Activated naive CD4-positive, alpha-beta T cell treated with anti-CD3 and anti-CD28 coated beads for 36 hours (primary cell): ENCODE measurements at regions of chr5 and their contacts with region 1.

Region 1: GRCh38 chr5:145825751-145826180 is 9.4 kb downstream of the PRELID2 start:
- DNase-seq: no peak
- H3K4me3 Mint-ChIP-seq: no peak overlapping the region
- H3K27ac Mint-ChIP-seq: no peak overlapping the region
- H3K4me1 Mint-ChIP-seq: no peaks in the 10 kb centered on the region
- H3K27me3 Mint-ChIP-seq: no peaks in the 10 kb centered on the region

Region 2: GRCh38 chr5:144203750-144204596 is 1621.8 kb before region 1 on chr5:
- CTCF ChIA-PET with region 1: interaction called, 15 read pairs
- intact Hi-C with region 1: loop called (anchors 1 kb)
- DNase-seq: peak; percentile 65
- H3K4me3 Mint-ChIP-seq: no peak overlapping the region
- H3K27ac Mint-ChIP-seq: no peak overlapping the region
- H3K4me1 Mint-ChIP-seq: peaks cover 17% of the 10 kb centered on the region
- H3K27me3 Mint-ChIP-seq: peaks cover 38% of the 10 kb centered on the region

Region 3: DNA sequence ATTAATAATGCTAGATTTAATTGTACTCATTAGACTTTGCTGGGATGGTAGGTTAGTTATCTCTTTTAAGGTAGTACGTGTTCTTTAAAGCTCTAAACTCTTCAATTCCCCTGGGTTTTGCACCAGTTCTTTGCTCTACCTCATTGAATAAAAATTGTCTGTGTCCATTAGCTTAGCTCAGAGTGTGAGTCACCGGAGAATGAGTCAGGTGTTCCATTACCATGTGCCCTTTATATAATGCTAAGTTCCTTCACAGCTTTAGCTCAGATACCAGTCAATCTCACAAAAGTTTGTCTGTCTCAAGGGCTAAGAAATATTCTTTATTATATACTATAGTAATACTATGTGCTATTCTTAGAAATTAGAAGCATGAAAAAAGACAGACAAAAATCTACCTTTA is 330.0 kb before region 1 on chr5:
- CTCF ChIA-PET with region 1: no interaction called
- intact Hi-C with region 1: no loop called
- DNase-seq: peak; percentile 5
- H3K4me3 Mint-ChIP-seq: no peak overlapping the region
- H3K27ac Mint-ChIP-seq: no peak overlapping the region
- H3K4me1 Mint-ChIP-seq: no peaks in the 10 kb centered on the region
- H3K27me3 Mint-ChIP-seq: no peaks in the 10 kb centered on the region

Region 4: GRCh38 chr5:145681686-145682085 is 144.1 kb before region 1 on chr5:
- CTCF ChIA-PET with region 1: interaction called, 6 read pairs
- intact Hi-C with region 1: loop called (anchors 1 kb)
- DNase-seq: peak; percentile 62
- H3K4me3 Mint-ChIP-seq: no peak overlapping the region
- H3K27ac Mint-ChIP-seq: no peak overlapping the region
- H3K4me1 Mint-ChIP-seq: no peaks in the 10 kb centered on the region
- H3K27me3 Mint-ChIP-seq: no peaks in the 10 kb centered on the region

Region 5: GRCh38 chr5:145697251-145697990 is 128.3 kb before region 1 on chr5:
- CTCF ChIA-PET with region 1: interaction called, 4 read pairs
- intact Hi-C with region 1: loop called (anchors 5 kb)
- DNase-seq: peak; percentile 29
- H3K4me3 Mint-ChIP-seq: no peak overlapping the region
- H3K27ac Mint-ChIP-seq: no peak overlapping the region
- H3K4me1 Mint-ChIP-seq: no peaks in the 10 kb centered on the region
- H3K27me3 Mint-ChIP-seq: no peaks in the 10 kb centered on the region

Region 6: DNA sequence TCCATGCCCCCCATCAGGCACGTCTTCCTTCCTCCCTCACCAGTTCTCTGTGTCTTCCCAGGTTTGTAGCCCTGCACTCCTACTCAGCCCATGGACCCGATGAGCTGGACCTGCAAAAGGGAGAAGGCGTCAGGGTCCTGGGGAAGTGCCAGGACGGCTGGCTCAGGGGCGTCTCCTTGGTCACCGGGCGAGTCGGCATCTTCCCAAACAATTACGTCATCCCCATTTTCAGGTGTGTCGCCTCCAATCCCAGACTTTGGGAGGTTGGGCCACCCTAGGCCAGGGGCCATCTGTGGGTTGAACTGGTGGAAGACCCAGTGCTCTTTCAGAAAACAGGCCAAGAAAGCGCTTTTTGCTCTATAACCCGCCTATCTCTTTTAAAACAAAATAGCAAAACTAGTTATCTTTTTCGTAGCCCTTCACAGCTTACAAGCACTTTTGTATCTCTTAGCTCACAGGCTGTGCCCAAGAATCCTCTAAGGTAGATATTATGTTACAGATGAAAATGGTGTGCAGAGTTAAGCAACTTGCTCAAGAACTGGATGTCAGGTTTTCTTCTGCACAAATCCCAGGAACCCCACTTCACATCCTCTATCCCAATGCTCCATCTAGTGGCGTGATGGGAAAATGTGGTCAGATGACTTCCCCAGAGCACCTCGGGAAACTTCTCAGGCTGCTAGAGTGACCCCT is 223.4 kb after region 1 on chr5:
- CTCF ChIA-PET with region 1: no interaction called
- intact Hi-C with region 1: loop called (anchors 5 kb)
- DNase-seq: peak; percentile 49
- H3K4me3 Mint-ChIP-seq: no peak overlapping the region
- H3K27ac Mint-ChIP-seq: no peak overlapping the region
- H3K4me1 Mint-ChIP-seq: no peaks in the 10 kb centered on the region
- H3K27me3 Mint-ChIP-seq: peaks cover 24% of the 10 kb centered on the region

Region 7: DNA sequence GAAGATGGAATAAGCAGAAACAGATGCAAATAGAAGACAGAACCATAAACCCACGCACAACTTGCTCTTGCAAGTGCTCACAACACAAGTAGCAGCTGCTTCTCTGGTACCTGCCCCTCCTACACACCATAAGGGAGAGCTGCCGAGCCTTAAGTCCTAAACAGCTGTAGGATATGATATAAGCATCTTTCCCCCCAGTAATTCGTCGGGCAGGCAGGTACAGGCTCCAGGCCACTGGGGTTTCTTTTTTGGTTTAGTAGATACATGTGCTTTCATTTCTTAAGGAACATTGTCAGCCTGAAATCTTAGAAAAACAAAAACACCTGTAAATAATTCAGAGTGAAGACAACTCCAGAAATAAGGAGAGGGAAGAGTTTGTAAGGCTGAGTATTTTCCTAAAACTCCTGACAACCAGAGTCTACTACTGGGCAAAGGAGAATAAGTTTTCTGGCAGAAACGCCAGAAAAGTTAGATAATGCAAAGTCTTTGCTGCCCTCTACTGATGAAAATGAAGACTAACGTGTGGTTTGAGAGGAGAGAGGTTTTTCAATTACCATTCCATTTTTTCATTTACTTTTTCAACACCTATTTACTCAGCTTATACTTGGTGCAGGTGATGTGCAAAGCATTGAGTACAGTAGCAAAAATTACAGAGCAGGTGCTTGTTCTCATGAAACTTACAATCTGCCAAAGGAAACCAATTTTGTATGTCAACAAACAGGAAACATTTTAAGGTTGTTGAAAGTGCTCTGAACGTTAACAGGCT is 601.3 kb after region 1 on chr5:
- CTCF ChIA-PET with region 1: no interaction called
- intact Hi-C with region 1: loop called (anchors 5 kb)
- DNase-seq: peak; percentile 5
- H3K4me3 Mint-ChIP-seq: no peak overlapping the region
- H3K27ac Mint-ChIP-seq: no peak overlapping the region
- H3K4me1 Mint-ChIP-seq: peaks cover 4% of the 10 kb centered on the region
- H3K27me3 Mint-ChIP-seq: peaks cover 9% of the 10 kb centered on the region